Activated naive CD4-positive, alpha-beta T cell treated with anti-CD3 and anti-CD28 coated beads for 36 hours (primary cell): ENCODE measurements at regions of chr11 and their contacts with region 1.

Region 1: GRCh38 chr11:33893711-33894397 is 2.0 kb upstream of the LMO2 start:
- DNase-seq: peak; percentile 87
- H3K4me3 Mint-ChIP-seq: peak overlapping the region; percentile 57
- H3K27ac Mint-ChIP-seq: peak overlapping the region; percentile 33
- H3K4me1 Mint-ChIP-seq: peaks cover 47% of the 10 kb centered on the region
- H3K27me3 Mint-ChIP-seq: peaks cover 47% of the 10 kb centered on the region

Region 2: GRCh38 chr11:32821517-32821916 is 1072.3 kb before region 1 on chr11:
- CTCF ChIA-PET with region 1: no interaction called
- intact Hi-C with region 1: loop called (anchors 5 kb)
- DNase-seq: peak; percentile 10
- H3K4me3 Mint-ChIP-seq: no peak overlapping the region
- H3K27ac Mint-ChIP-seq: peak overlapping the region; percentile 4
- H3K4me1 Mint-ChIP-seq: peaks cover 25% of the 10 kb centered on the region
- H3K27me3 Mint-ChIP-seq: no peaks in the 10 kb centered on the region

Region 3: DNA sequence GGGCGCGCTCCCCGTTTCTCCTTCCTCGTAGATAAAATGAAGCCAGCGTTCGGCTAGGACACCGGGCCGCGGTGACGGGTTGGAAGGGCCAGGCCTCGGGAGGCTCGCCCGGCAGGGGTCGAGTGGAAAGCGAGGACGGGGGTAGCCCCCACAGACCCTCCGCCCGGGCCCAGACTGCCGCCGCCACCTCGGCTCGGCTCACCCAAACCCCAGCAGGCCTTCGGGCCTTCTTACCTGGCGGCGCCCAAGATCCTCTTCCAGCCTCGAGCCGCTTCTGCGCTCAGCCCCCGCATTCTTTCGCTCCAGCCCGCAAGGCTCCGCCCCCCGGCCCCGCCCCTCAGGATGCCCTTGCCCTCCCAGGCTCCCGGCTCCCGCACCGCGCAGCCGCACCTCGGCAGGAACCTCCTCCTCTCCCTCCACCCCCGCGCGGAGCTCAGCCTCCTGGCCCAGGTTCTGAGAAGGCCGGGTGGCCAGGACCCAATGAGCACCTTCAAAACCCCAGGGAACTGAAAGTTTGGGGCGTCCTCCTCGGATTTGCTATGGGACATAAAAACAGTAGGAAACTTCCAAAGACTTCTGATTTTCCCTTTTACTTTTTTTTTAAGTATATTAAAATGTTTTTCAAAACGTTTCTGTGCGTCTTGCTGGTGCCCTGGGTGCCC is 157.6 kb before region 1 on chr11 and contains the start of gene CD59:
- CTCF ChIA-PET with region 1: no interaction called
- intact Hi-C with region 1: loop called (anchors 5 kb)
- DNase-seq: peak; percentile 95
- H3K4me3 Mint-ChIP-seq: peak within 1 kb of the TSS; percentile 78
- H3K27ac Mint-ChIP-seq: peak within 1 kb of the TSS; percentile 61
- H3K4me1 Mint-ChIP-seq: peaks cover 33% of the 10 kb centered on the region
- H3K27me3 Mint-ChIP-seq: no peaks in the 10 kb centered on the region
- total RNA-seq, gene CD59: 59.9 to 61.9 TPM

Region 4: GRCh38 chr11:33942954-33943353 is 49.1 kb after region 1 on chr11:
- CTCF ChIA-PET with region 1: no interaction called
- intact Hi-C with region 1: loop called (anchors 1 kb)
- DNase-seq: peak; percentile 34
- H3K4me3 Mint-ChIP-seq: no peak overlapping the region
- H3K27ac Mint-ChIP-seq: no peak overlapping the region
- H3K4me1 Mint-ChIP-seq: no peaks in the 10 kb centered on the region
- H3K27me3 Mint-ChIP-seq: no peaks in the 10 kb centered on the region

Region 5: DNA sequence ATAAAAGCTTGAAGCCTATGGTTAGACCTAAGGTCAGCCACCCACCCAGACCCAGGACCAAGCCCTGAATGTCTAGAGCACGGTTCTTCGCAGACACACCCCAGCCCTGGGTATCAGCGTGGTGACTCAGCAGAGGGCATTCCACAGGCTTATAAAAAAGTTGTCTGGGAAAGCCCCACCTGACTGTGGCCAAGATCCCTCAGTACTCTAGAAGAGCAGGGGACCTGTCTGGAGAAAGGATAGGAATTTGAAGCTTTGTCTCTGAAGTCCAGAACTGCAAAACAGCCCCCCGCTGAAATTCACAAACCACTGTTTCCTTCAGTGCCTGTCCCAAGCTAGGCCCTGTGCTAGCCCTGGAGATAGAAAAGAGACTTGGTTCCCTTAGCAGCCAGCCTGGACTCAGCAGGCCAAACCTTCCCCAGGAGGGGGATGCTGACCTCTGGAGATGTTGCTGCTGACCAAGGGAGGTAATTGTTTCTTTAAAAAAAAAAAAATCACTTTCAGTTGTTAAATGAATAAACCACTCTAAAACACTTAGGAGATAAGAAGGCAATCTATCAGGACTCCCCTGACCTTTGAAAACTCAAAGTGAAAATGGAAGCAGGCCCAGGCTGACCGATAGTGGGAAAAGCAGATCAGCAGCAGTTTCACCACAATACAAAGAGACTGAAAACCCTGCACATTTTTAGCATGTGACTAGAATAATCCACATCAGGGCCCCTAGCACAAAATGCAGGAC is 350.0 kb after region 1 on chr11:
- CTCF ChIA-PET with region 1: no interaction called
- intact Hi-C with region 1: loop called (anchors 2 kb)
- DNase-seq: peak; percentile 77
- H3K4me3 Mint-ChIP-seq: no peak overlapping the region
- H3K27ac Mint-ChIP-seq: peak overlapping the region; percentile 46
- H3K4me1 Mint-ChIP-seq: peaks cover 78% of the 10 kb centered on the region
- H3K27me3 Mint-ChIP-seq: peaks cover 2% of the 10 kb centered on the region